Mammary epithelial cell (primary cell): ENCODE measurements at regions of chr4 and their contacts with region 1.

Region 1: DNA sequence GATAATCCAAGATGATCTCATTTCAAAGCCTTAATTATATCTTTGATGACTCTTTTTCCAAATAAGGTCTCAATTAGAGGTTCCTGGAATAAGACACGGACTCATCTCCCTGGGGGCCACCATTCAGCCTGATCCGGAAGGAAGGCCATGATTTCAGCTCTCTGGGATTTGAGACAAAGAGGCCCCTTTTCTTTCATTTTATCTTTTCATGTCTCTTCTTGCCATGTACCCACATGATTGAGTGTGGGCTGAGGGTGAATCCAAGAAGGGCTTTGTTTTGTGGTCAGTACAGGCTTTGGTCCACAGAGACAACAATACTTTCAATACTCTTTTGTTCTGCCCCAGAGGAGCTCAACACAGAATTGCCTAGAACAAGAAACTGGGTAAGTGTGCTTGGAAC is 261.2 kb downstream of the TRIML1 start:
- DNase-seq: peak; percentile 80
- H3K4me3 ChIP-seq: peak overlapping the region in 1 of 3 experiments; percentile 43
- H3K27ac ChIP-seq: peak overlapping the region; percentile 85
- H3K4me1 ChIP-seq: peaks cover 45% of the 10 kb centered on the region
- H3K27me3 ChIP-seq: no peaks in the 10 kb centered on the region
- CTCF ChIP-seq: no peak

Region 2: GRCh38 chr4:187606581-187606980 is 793.9 kb before region 1 on chr4:
- CTCF ChIA-PET with region 1: no interaction called
- dilution Hi-C with region 1: no loop called
- in situ Hi-C with region 1: no loop called
- intact Hi-C with region 1: loop called (anchors 10 kb)
- DNase-seq: peak; percentile 57
- H3K4me3 ChIP-seq: no peak overlapping the region
- H3K27ac ChIP-seq: no peak overlapping the region
- H3K4me1 ChIP-seq: peaks cover 16% of the 10 kb centered on the region
- H3K27me3 ChIP-seq: no peaks in the 10 kb centered on the region
- CTCF ChIP-seq: peak; percentile 87 to 89

Region 3: DNA sequence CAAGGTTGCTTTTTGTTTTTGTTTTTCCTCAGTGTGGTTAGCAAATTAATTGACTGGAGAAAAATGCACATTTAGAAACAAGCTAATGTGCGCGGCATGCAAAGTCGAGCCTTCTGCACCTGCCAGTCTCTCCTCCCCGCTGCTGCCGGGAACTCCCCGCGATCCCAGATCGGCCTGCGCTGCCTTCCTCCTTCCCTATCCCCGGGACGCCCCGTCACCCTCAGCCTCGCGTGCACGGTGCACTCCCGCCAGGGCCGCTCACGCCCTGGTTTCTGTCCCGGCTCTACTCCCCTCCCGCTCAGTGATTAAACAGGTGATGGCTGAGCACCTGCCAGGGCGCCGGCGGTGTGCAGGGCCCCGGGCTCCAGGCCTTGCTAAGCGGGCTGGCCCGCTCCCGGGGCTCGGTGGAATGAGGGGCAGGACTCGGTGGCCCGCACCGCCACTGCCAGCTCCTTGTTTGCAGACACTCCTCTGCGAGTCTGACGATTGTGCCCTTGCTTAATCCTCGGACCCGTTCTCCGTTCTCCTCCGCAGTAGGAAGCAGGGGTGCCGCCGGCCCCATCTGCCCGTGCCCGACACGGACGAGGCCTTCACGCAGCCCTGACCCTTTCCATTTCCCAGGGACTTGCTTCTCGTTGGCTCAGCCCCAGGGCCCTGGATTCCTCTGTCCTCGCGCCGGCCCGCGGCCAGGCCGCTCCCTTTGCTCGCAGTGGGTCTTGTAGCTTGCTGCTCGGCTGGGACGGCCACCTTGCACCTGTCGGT is 117.8 kb before region 1 on chr4:
- CTCF ChIA-PET with region 1: no interaction called
- dilution Hi-C with region 1: no loop called
- in situ Hi-C with region 1: no loop called
- intact Hi-C with region 1: no loop called
- DNase-seq: no peak
- H3K4me3 ChIP-seq: no peak overlapping the region
- H3K27ac ChIP-seq: no peak overlapping the region
- H3K4me1 ChIP-seq: no peaks in the 10 kb centered on the region
- H3K27me3 ChIP-seq: no peaks in the 10 kb centered on the region
- CTCF ChIP-seq: no peak

Region 4: GRCh38 chr4:188627892-188628291 is 227.4 kb after region 1 on chr4:
- CTCF ChIA-PET with region 1: no interaction called
- dilution Hi-C with region 1: no loop called
- in situ Hi-C with region 1: no loop called
- intact Hi-C with region 1: loop called (anchors 10 kb)
- DNase-seq: no peak
- H3K4me3 ChIP-seq: no peak overlapping the region
- H3K27ac ChIP-seq: no peak overlapping the region
- H3K4me1 ChIP-seq: no peaks in the 10 kb centered on the region
- H3K27me3 ChIP-seq: no peaks in the 10 kb centered on the region
- CTCF ChIP-seq: no peak

Region 5: GRCh38 chr4:188941524-188942119 is 541.2 kb after region 1 on chr4:
- CTCF ChIA-PET with region 1: no interaction called
- dilution Hi-C with region 1: no loop called
- in situ Hi-C with region 1: no loop called
- intact Hi-C with region 1: loop called (anchors 5 kb)
- DNase-seq: peak; percentile 99
- H3K4me3 ChIP-seq: no peak overlapping the region
- H3K27ac ChIP-seq: peak overlapping the region; percentile 88
- H3K4me1 ChIP-seq: peaks cover 17% of the 10 kb centered on the region
- H3K27me3 ChIP-seq: no peaks in the 10 kb centered on the region
- CTCF ChIP-seq: no peak